ENCODE measurements at regions of chr16 and their contacts with region 1.

Region 1: GRCh38 chr16:50806099-50807062 is 64.5 kb downstream of the CYLD start:
- DNase-seq: peak; percentile 91
- ATAC-seq: peak; percentile 92
- H3K4me3 Mint-ChIP-seq: peak overlapping the region; percentile 66
- H3K27ac Mint-ChIP-seq: peak overlapping the region; percentile 70
- H3K4me1 Mint-ChIP-seq: peaks cover 13% of the 10 kb centered on the region
- H3K27me3 Mint-ChIP-seq: no peaks in the 10 kb centered on the region
- CTCF ChIP-seq: peak; percentile 98

Region 2: GRCh38 chr16:50326949-50327402 is 479.4 kb before region 1 on chr16:
- CTCF ChIA-PET with region 1: interaction called, 21 read pairs
- POLR2A ChIA-PET with region 1: no interaction called
- intact Hi-C with region 1: no loop called
- DNase-seq: peak; percentile 86
- ATAC-seq: peak; percentile 95
- H3K4me3 Mint-ChIP-seq: no peak overlapping the region
- H3K27ac Mint-ChIP-seq: peak overlapping the region; percentile 73
- H3K4me1 Mint-ChIP-seq: peaks cover 51% of the 10 kb centered on the region
- H3K27me3 Mint-ChIP-seq: no peaks in the 10 kb centered on the region
- CTCF ChIP-seq: peak; percentile 65

Region 3: GRCh38 chr16:50627419-50627818 is 179.0 kb before region 1 on chr16:
- CTCF ChIA-PET with region 1: interaction called, 13 read pairs
- POLR2A ChIA-PET with region 1: no interaction called
- intact Hi-C with region 1: no loop called
- DNase-seq: peak; percentile 75
- ATAC-seq: peak; percentile 84
- H3K4me3 Mint-ChIP-seq: no peak overlapping the region
- H3K27ac Mint-ChIP-seq: peak overlapping the region; percentile 54
- H3K4me1 Mint-ChIP-seq: peaks cover 29% of the 10 kb centered on the region
- H3K27me3 Mint-ChIP-seq: no peaks in the 10 kb centered on the region
- CTCF ChIP-seq: peak; percentile 32

Region 4: DNA sequence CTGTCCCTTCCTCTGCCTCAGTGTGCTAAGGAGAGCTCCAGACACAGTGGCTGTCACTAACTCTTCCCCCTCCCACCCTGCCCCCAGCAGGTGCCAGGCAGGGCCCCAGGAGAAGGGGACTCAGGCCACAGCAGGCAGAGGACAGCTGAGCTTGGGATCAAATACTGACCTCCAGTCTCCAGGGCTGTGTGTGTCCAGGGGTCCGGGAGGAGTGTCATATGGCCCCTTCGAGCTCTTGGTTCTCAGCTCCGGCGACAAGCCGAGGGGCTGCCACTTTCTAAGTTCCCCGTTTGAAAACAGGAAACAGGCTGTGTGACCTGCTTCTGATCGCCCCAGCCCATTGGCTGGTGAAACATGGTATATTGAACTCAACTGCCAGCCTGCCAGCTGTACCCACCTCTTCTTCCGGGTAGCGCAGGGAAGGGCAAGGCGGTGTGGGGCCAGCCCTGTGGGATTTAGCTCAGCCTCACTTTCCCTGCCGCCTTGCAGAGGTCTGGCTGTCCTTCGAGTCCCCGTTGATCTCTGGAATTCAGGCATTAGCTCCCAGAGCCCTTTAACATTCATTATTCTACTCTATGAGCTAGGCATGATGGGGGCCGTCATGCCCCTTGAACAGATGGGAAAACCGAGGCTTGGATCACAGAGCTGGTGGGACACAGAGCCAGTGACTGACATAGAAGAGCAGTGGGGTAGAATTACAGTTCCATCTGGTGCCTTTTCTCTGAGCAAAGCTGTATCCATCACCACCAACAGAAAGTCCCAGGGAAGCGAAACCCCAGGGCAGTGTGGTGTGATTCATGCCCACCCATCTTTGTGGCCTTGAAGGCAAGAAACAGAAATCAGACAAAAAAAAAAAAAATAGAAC is 125.1 kb before region 1 on chr16 and contains the start of gene SNX20:
- CTCF ChIA-PET with region 1: interaction called, 25 read pairs
- POLR2A ChIA-PET with region 1: interaction called, 4 read pairs
- intact Hi-C with region 1: no loop called
- DNase-seq: peak; percentile 81
- ATAC-seq: peak; percentile 83
- H3K4me3 Mint-ChIP-seq: peak within 1 kb of the TSS; percentile 78
- H3K27ac Mint-ChIP-seq: peak within 1 kb of the TSS; percentile 93
- H3K4me1 Mint-ChIP-seq: peaks cover 79% of the 10 kb centered on the region
- H3K27me3 Mint-ChIP-seq: no peaks in the 10 kb centered on the region
- CTCF ChIP-seq: no peak
- total RNA-seq, gene SNX20: 24.6 to 25.0 TPM

Region 5: GRCh38 chr16:50741808-50742575 is 64.4 kb before region 1 on chr16 and contains the start of gene CYLD:
- CTCF ChIA-PET with region 1: interaction called, 78 read pairs
- POLR2A ChIA-PET with region 1: interaction called, 4 read pairs
- intact Hi-C with region 1: loop called (anchors 5 kb)
- DNase-seq: peak; percentile 100
- ATAC-seq: peak; percentile 91
- H3K4me3 Mint-ChIP-seq: peak within 1 kb of the TSS; percentile 93
- H3K27ac Mint-ChIP-seq: peak within 1 kb of the TSS; percentile 97
- H3K4me1 Mint-ChIP-seq: peaks cover 38% of the 10 kb centered on the region
- H3K27me3 Mint-ChIP-seq: no peaks in the 10 kb centered on the region
- CTCF ChIP-seq: no peak
- total RNA-seq, gene CYLD: 86.4 to 94.4 TPM

Region 6: GRCh38 chr16:50765260-50765659 is 41.1 kb before region 1 on chr16:
- CTCF ChIA-PET with region 1: interaction called, 26 read pairs
- POLR2A ChIA-PET with region 1: interaction called, 5 read pairs
- intact Hi-C with region 1: no loop called
- DNase-seq: no peak
- ATAC-seq: peak; percentile 75
- H3K4me3 Mint-ChIP-seq: no peak overlapping the region
- H3K27ac Mint-ChIP-seq: peak overlapping the region; percentile 82
- H3K4me1 Mint-ChIP-seq: peaks cover 87% of the 10 kb centered on the region
- H3K27me3 Mint-ChIP-seq: no peaks in the 10 kb centered on the region
- CTCF ChIP-seq: no peak

Region 7: DNA sequence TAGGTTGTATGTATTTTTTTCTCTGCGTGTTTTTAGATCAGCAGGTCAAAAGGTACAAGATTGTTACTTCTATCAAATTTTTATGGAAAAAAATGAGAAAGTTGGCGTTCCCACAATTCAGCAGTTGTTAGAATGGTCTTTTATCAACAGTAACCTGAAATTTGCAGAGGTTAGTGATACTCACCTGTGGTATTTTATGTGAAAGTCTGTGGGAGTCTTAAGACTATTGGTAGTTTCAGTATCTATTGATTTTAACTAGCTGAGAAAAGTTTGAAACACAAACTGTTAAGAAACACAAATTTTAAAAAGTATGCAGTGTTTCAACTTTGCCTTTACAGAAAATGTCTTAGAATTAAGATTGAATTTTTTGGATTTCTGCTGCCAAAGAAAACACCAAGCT is 14.9 kb before region 1 on chr16:
- CTCF ChIA-PET with region 1: interaction called, 60 read pairs
- POLR2A ChIA-PET with region 1: interaction called, 3 read pairs
- intact Hi-C with region 1: no loop called
- DNase-seq: no peak
- ATAC-seq: no peak
- H3K4me3 Mint-ChIP-seq: no peak overlapping the region
- H3K27ac Mint-ChIP-seq: no peak overlapping the region
- H3K4me1 Mint-ChIP-seq: peaks cover 21% of the 10 kb centered on the region
- H3K27me3 Mint-ChIP-seq: no peaks in the 10 kb centered on the region
- CTCF ChIP-seq: no peak

Region 8: DNA sequence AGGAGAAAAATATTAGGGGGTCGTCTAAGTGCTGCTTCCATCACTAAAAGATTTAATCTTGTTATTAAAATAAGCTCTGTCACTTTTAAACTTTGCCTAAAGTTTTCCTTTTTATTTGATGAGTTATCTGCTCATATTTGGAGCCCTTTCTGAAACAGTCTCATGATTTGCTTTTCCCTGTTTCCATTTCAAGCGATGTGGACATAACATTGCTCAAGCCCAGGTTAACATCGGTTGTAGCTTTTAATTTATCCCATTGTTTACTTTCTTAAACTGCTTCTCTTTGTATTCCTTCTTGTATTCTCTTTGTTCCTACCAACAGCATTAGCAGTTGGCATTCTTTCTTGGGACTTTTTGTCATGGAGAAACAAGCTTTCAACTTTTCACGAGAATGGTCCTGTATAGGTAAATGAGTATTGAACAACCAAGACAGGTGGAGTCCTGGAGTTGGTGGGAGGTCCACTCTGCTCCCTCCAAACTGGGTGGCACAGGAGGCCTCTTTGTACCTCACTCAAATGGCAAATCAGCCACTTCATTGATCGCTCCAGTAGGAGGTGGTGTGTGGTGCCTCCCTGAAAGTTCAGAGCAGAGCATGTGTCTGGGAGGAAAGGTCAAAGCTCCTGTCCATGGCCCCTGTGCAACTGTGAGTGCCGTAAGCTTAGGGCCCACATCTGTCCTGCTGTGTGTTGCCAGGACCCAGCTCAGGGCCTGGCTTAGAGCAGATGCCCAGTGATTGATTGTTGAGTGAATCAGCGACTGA is 42.6 kb after region 1 on chr16:
- CTCF ChIA-PET with region 1: no interaction called
- POLR2A ChIA-PET with region 1: no interaction called
- intact Hi-C with region 1: no loop called
- DNase-seq: no peak
- ATAC-seq: no peak
- H3K4me3 Mint-ChIP-seq: no peak overlapping the region
- H3K27ac Mint-ChIP-seq: no peak overlapping the region
- H3K4me1 Mint-ChIP-seq: no peaks in the 10 kb centered on the region
- H3K27me3 Mint-ChIP-seq: peaks cover 5% of the 10 kb centered on the region
- CTCF ChIP-seq: no peak